CD4-positive, alpha-beta T cell (primary cell): ENCODE measurements at regions of chr2 and their contacts with region 1.

Region 1: GRCh38 chr2:214809751-214810564 is 475 bp upstream of the BARD1 start:
- DNase-seq: peak; percentile 83 to 100 (median 96)
- ATAC-seq: peak; percentile 70
- H3K4me3 ChIP-seq: peak overlapping the region; percentile 94
- H3K4me3 Mint-ChIP-seq: peak overlapping the region; percentile 94
- H3K27ac ChIP-seq: peak overlapping the region; percentile 52 to 65
- H3K27ac Mint-ChIP-seq: peak overlapping the region; percentile 83
- H3K4me1 ChIP-seq: peaks cover 18% of the 10 kb centered on the region
- H3K4me1 Mint-ChIP-seq: peaks cover 41% of the 10 kb centered on the region
- H3K27me3 ChIP-seq: no peaks in the 10 kb centered on the region
- H3K27me3 Mint-ChIP-seq: no peaks in the 10 kb centered on the region
- CTCF ChIP-seq: no peak

Region 2: GRCh38 chr2:213284105-213285090 is 1525.6 kb before region 1 on chr2 and contains the start of gene SPAG16:
- CTCF ChIA-PET with region 1: no interaction called
- POLR2A ChIA-PET with region 1: interaction called, 6 read pairs
- intact Hi-C with region 1: loop called in 1 of 2 experiments (anchors 5 kb)
- DNase-seq: peak; percentile 89 to 98 (median 94)
- ATAC-seq: peak; percentile 95
- H3K4me3 ChIP-seq: peak within 1 kb of the TSS; percentile 76
- H3K4me3 Mint-ChIP-seq: peak within 1 kb of the TSS; percentile 93
- H3K27ac ChIP-seq: peak within 1 kb of the TSS; percentile 16 to 59
- H3K27ac Mint-ChIP-seq: peak within 1 kb of the TSS; percentile 89
- H3K4me1 ChIP-seq: peaks cover 9% of the 10 kb centered on the region
- H3K4me1 Mint-ChIP-seq: peaks cover 53% of the 10 kb centered on the region
- H3K27me3 ChIP-seq: no peaks in the 10 kb centered on the region
- H3K27me3 Mint-ChIP-seq: no peaks in the 10 kb centered on the region
- CTCF ChIP-seq: no peak
- total RNA-seq, gene SPAG16: 2.8 to 3.2 TPM

Region 3: DNA sequence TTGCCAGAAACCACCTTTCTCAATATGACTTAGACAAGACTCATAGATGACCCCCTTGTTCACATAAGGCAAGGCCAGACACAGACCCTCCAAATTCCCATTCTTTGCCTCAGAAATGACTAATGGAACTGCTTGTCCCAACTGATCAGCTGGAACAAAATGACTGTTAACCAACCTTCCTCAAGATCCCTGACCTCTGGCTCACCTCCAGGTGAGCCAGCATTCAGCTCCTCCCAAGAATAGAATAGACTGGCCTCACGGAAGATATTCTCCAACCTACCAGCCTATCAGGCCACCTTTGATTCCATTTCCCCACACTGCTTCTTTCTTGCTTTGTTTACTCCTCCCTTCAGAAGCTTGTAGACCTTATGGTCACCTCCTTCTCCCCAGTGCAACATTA is 594.9 kb before region 1 on chr2:
- CTCF ChIA-PET with region 1: no interaction called
- POLR2A ChIA-PET with region 1: no interaction called
- intact Hi-C with region 1: no loop called
- DNase-seq: no peak
- ATAC-seq: no peak
- H3K4me3 ChIP-seq: no peak overlapping the region
- H3K4me3 Mint-ChIP-seq: no peak overlapping the region
- H3K27ac ChIP-seq: no peak overlapping the region
- H3K27ac Mint-ChIP-seq: no peak overlapping the region
- H3K4me1 ChIP-seq: no peaks in the 10 kb centered on the region
- H3K4me1 Mint-ChIP-seq: no peaks in the 10 kb centered on the region
- H3K27me3 ChIP-seq: no peaks in the 10 kb centered on the region
- H3K27me3 Mint-ChIP-seq: no peaks in the 10 kb centered on the region
- CTCF ChIP-seq: no peak

Region 4: DNA sequence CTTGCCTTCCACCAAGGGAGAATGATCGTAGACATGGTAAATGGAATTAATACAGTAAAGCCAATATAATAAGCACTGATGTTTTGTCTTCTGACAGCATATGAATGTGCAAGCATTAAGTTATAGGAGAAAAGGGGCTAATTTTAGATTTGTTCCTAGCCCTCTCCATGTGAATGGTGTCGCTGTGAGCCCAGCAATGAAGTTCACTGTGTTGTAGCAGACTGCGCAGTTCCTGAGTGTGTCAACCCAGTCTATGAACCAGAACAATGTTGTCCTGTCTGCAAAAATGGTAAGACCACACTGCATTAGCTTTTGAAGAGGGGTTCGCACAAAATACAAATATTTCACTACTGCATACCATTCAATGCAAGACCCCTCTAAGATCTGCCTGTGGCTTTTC is 373.5 kb before region 1 on chr2:
- CTCF ChIA-PET with region 1: no interaction called
- POLR2A ChIA-PET with region 1: no interaction called
- intact Hi-C with region 1: no loop called
- DNase-seq: no peak
- ATAC-seq: no peak
- H3K4me3 ChIP-seq: no peak overlapping the region
- H3K4me3 Mint-ChIP-seq: no peak overlapping the region
- H3K27ac ChIP-seq: no peak overlapping the region
- H3K27ac Mint-ChIP-seq: no peak overlapping the region
- H3K4me1 ChIP-seq: no peaks in the 10 kb centered on the region
- H3K4me1 Mint-ChIP-seq: no peaks in the 10 kb centered on the region
- H3K27me3 ChIP-seq: no peaks in the 10 kb centered on the region
- H3K27me3 Mint-ChIP-seq: no peaks in the 10 kb centered on the region
- CTCF ChIP-seq: no peak

Region 5: GRCh38 chr2:214630402-214631045 is 179.4 kb before region 1 on chr2:
- CTCF ChIA-PET with region 1: no interaction called
- POLR2A ChIA-PET with region 1: no interaction called
- intact Hi-C with region 1: no loop called
- DNase-seq: no peak
- ATAC-seq: no peak
- H3K4me3 ChIP-seq: no peak overlapping the region
- H3K4me3 Mint-ChIP-seq: no peak overlapping the region
- H3K27ac ChIP-seq: no peak overlapping the region
- H3K27ac Mint-ChIP-seq: no peak overlapping the region
- H3K4me1 ChIP-seq: no peaks in the 10 kb centered on the region
- H3K4me1 Mint-ChIP-seq: no peaks in the 10 kb centered on the region
- H3K27me3 ChIP-seq: no peaks in the 10 kb centered on the region
- H3K27me3 Mint-ChIP-seq: no peaks in the 10 kb centered on the region
- CTCF ChIP-seq: no peak

Region 6: DNA sequence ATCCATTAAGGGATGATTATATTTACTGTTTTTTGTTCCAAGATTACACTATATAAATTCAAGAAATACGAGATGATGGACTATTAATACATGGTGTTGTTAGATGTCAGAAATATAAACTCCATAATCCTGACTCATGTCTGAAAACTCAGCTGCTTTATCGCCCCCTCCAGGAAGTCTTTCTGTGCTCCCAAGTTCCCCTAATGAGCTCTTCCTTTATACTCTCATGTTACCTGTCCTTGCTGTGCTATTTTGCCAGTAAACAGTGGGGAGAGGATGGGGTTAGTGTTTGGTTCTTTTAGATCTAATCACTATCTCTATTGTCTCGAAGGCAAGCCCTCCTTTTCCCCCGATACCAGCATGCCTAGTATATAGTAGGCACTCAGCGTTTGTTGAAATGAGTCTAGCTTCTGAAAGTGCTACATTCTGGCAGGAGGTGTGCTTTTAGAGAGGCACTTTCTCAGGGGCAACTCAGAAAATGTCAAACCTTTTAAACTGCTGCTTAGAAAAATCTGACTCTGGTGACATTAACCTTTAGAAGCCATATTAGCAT is 20.9 kb after region 1 on chr2:
- CTCF ChIA-PET with region 1: no interaction called
- POLR2A ChIA-PET with region 1: no interaction called
- intact Hi-C with region 1: no loop called
- DNase-seq: peak in 4 of 14 experiments; percentile 27 to 50 (median 36)
- ATAC-seq: no peak
- H3K4me3 ChIP-seq: no peak overlapping the region
- H3K4me3 Mint-ChIP-seq: no peak overlapping the region
- H3K27ac ChIP-seq: no peak overlapping the region
- H3K27ac Mint-ChIP-seq: no peak overlapping the region
- H3K4me1 ChIP-seq: no peaks in the 10 kb centered on the region
- H3K4me1 Mint-ChIP-seq: no peaks in the 10 kb centered on the region
- H3K27me3 ChIP-seq: no peaks in the 10 kb centered on the region
- H3K27me3 Mint-ChIP-seq: no peaks in the 10 kb centered on the region
- CTCF ChIP-seq: peak; percentile 21

Region 7: GRCh38 chr2:215311625-215312396 is 501.9 kb after region 1 on chr2 and contains the start of gene ATIC:
- CTCF ChIA-PET with region 1: no interaction called
- POLR2A ChIA-PET with region 1: interaction called, 5 read pairs
- intact Hi-C with region 1: loop called in 1 of 2 experiments (anchors 2 kb)
- DNase-seq: peak; percentile 73 to 93 (median 86)
- ATAC-seq: peak; percentile 96
- H3K4me3 ChIP-seq: peak within 1 kb of the TSS; percentile 76
- H3K4me3 Mint-ChIP-seq: peak within 1 kb of the TSS; percentile 96
- H3K27ac ChIP-seq: peak within 1 kb of the TSS; percentile 21 to 56
- H3K27ac Mint-ChIP-seq: peak within 1 kb of the TSS; percentile 92
- H3K4me1 ChIP-seq: peaks cover 26% of the 10 kb centered on the region
- H3K4me1 Mint-ChIP-seq: peaks cover 38% of the 10 kb centered on the region
- H3K27me3 ChIP-seq: no peaks in the 10 kb centered on the region
- H3K27me3 Mint-ChIP-seq: no peaks in the 10 kb centered on the region
- CTCF ChIP-seq: no peak
- total RNA-seq, gene ATIC: 40.5 to 43.3 TPM

Region 8: DNA sequence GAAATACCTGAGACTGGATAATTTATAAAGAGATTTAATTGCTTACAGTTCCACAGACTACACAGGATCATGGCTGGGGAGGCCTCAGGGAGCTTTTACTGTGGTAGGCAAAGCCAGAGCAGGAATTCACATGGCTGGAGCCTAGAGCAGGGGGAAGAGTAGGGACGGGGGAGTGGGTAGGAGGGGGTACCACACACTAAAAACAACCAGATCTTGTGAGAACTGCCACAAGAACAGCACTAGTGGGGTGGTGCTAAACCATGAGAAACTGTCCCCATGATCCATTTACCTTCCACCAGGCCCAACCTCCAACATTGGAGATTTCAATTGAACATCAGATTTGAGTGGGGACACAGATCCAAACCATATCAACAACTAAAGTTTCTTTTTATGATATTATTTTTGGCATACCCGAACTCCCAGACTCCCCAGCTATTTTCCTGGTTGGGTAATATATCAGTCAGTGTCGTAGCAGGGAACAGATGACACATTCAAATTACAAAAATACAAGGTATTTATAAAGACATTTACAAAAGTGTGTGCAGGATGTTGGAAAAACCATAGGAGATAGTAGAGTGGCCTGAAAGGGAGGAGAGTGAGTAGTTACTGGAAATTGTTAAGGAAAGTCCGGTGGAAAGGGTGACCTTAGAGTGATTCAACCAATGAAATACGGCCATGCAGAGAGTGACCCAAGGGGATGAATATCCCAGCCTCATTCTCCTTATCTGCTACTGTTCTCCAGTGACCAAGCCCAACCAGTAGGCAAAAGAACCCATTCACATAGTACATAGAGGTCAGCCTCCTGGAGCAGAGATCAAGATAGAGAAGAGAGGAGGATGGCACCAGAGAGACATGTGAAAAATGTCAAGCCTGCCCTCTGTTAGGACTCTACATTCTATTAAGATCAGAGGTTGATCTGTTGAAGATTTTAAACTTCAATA is 1697.5 kb after region 1 on chr2:
- CTCF ChIA-PET with region 1: no interaction called
- POLR2A ChIA-PET with region 1: no interaction called
- intact Hi-C with region 1: loop called in 1 of 2 experiments (anchors 10 kb)
- DNase-seq: no peak
- ATAC-seq: no peak
- H3K4me3 ChIP-seq: no peak overlapping the region
- H3K4me3 Mint-ChIP-seq: no peak overlapping the region
- H3K27ac ChIP-seq: no peak overlapping the region
- H3K27ac Mint-ChIP-seq: no peak overlapping the region
- H3K4me1 ChIP-seq: peaks cover 2% of the 10 kb centered on the region
- H3K4me1 Mint-ChIP-seq: peaks cover 18% of the 10 kb centered on the region
- H3K27me3 ChIP-seq: no peaks in the 10 kb centered on the region
- H3K27me3 Mint-ChIP-seq: no peaks in the 10 kb centered on the region
- CTCF ChIP-seq: no peak